Dorsolateral prefrontal cortex (tissue), 120 donors: ENCODE measurements at regions of chr14 and their contacts with region 1.

Region 1: GRCh38 chr14:93381644-93382043 is 34.7 kb downstream of the COX8C start:
- DNase-seq: no peak
- H3K4me3 ChIP-seq: no peak overlapping the region
- H3K27ac ChIP-seq: peak overlapping the region in 2 of 59 donors; percentile 16 to 17
- H3K27me3 ChIP-seq: no peaks in the 10 kb centered on the region
- CTCF ChIP-seq: no peak

Region 2: DNA sequence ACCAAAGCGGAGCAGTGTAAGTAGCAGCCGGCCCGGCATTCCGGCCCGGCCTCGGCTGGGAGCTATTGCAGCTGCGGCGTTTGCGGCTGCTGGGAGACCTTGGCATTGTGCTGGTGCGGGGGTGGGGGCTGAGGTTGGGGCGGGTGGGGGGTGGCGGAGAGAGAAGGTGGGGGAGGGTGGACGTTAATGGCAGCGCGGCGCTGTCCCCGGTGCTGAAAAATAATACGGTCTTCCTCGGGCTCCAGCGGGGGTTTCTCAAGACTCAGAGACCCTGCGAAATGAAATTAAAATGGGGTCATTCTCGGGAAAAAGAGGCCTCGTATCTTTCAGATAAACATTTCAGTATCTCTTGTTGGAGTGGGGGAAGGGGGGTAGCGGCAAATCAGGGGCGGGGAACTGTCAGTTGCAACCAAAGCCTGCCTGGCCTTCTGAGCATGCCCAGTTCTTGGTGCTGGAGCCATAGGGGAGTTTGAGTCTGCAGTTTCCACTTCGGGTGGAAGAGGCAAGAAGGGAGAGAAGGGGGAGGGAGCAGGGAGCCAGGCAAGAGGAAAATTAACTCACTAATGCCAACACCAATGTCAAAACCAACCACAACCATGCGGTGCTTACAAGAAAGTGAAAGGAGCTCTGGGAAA is 49.5 kb after region 1 on chr14:
- intact Hi-C with region 1: loop called in 1 of 2 experiments (anchors 5 kb)
- DNase-seq: peak; percentile 56 to 89 (median 81)
- H3K4me3 ChIP-seq: peak overlapping the region; percentile 46 to 82 (median 66)
- H3K27ac ChIP-seq: peak overlapping the region in 53 of 59 donors; percentile 38 to 89 (median 73)
- H3K27me3 ChIP-seq: no peaks in the 10 kb centered on the region
- CTCF ChIP-seq: no peak